ENCODE measurements at regions of chr19 and their contacts with region 1.

Region 1: GRCh38 chr19:17977021-17977420 is 10.1 kb downstream of the KCNN1 start:
- H3K4me3 ChIP-seq: no peak overlapping the region
- H3K27ac ChIP-seq: no peak overlapping the region
- H3K4me1 ChIP-seq: no peaks in the 10 kb centered on the region
- CTCF ChIP-seq: no peak

Region 2: GRCh38 chr19:17692566-17692965 is 284.5 kb before region 1 on chr19:
- CTCF ChIA-PET with region 1: no interaction called
- POLR2A ChIA-PET with region 1: no interaction called
- H3K4me3 ChIP-seq: no peak overlapping the region
- H3K27ac ChIP-seq: no peak overlapping the region
- H3K4me1 ChIP-seq: no peaks in the 10 kb centered on the region
- CTCF ChIP-seq: no peak

Region 3: GRCh38 chr19:17938092-17938845 is 38.8 kb before region 1 on chr19:
- CTCF ChIA-PET with region 1: interaction called, 10 read pairs
- POLR2A ChIA-PET with region 1: interaction called, 4 read pairs
- H3K4me3 ChIP-seq: no peak overlapping the region
- H3K27ac ChIP-seq: no peak overlapping the region
- H3K4me1 ChIP-seq: no peaks in the 10 kb centered on the region
- CTCF ChIP-seq: peak; percentile 88

Region 4: DNA sequence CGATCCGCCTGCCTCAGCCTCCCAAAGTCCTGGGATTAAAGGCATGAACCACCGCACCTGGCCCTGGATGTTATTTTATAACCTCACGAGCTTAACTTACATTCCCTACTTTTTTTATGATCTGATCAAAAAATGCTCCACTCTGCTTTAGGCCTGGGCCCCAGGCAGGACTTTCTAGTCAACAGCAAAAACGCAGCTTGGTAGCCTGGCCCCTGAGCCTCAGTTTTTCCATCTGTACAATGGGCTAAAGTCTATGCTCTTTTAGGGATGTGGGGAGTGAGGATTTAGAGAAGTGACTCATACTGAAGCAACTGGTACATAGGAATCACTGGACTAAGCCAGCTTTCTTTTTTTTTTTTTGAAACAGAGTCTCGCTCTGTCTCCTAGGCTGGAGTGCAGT is 164.0 kb after region 1 on chr19:
- CTCF ChIA-PET with region 1: no interaction called
- POLR2A ChIA-PET with region 1: no interaction called
- H3K4me3 ChIP-seq: no peak overlapping the region
- H3K27ac ChIP-seq: no peak overlapping the region
- H3K4me1 ChIP-seq: no peaks in the 10 kb centered on the region
- CTCF ChIP-seq: no peak

Measured in HEK293 (cell line).